Astrocyte of the cerebellum (primary cell): ENCODE measurements at regions of chr11 and their contacts with region 1.

Region 1: GRCh38 chr11:75022759-75023396 is 34.1 kb downstream of the NEU3 start:
- DNase-seq: peak; percentile 68
- H3K4me3 ChIP-seq: no peak overlapping the region
- CTCF ChIP-seq: peak; percentile 99

Region 2: GRCh38 chr11:75063732-75064314 is 40.9 kb after region 1 on chr11:
- in situ Hi-C with region 1: no loop called
- DNase-seq: no peak
- H3K4me3 ChIP-seq: no peak overlapping the region
- CTCF ChIP-seq: no peak

Region 3: GRCh38 chr11:75204685-75205563 is 182.0 kb after region 1 on chr11:
- in situ Hi-C with region 1: loop called (anchors 10 kb)
- DNase-seq: peak; percentile 57
- H3K4me3 ChIP-seq: no peak overlapping the region
- CTCF ChIP-seq: peak; percentile 89